Activated B cell treated with CpG ODN at 0.5 μM for 24 hours (primary cell): ENCODE measurements at regions of chr20 and their contacts with region 1.

Region 1: GRCh38 chr20:62642040-62642665 is at the start of gene SLCO4A1:
- DNase-seq: peak; percentile 90
- ATAC-seq: peak; percentile 91
- H3K4me3 Mint-ChIP-seq: peak within 1 kb of the TSS; percentile 87
- H3K27ac Mint-ChIP-seq: peak within 1 kb of the TSS; percentile 72
- H3K4me1 Mint-ChIP-seq: peaks cover 41% of the 10 kb centered on the region
- H3K27me3 Mint-ChIP-seq: no peaks in the 10 kb centered on the region
- CTCF ChIP-seq: no peak
- total RNA-seq, gene SLCO4A1: 27.8 and 38.9 TPM in 2 replicates

Region 2: DNA sequence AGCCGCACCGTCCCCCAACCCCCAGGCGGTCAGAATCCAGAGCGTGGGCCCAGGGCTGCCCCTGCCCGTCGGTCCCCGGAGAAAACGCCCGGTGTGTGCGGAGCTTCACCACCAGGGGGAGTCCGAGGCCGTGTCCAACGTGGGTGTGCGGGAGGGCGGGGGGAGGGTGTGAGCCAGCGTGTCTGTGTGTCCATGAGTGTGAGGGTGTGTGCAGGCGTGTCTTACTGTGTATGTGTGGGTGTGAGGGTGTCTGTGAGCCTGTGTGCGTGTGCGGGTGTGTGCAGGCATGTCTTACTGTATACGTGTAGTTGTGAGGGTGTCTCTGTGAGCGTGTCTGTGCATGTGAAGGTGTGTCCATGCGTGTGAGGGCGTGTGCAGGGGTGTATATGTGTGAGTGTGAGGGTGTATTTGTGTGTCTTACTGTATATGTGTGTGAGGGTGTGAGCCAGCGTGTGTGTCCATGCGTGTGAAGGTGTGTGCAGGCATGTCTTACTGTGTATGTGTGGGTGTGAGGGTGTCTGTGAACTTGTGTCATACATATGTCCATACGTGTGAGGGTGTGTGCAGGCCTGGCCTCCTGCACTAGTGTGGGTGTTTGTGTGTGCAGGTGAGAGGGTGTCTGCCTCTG is 141.8 kb before region 1 on chr20:
- CTCF ChIA-PET with region 1: interaction called, 3 read pairs
- POLR2A ChIA-PET with region 1: interaction called, 11 read pairs
- intact Hi-C with region 1: no loop called
- DNase-seq: peak; percentile 77
- ATAC-seq: peak; percentile 49
- H3K4me3 Mint-ChIP-seq: no peak overlapping the region
- H3K27ac Mint-ChIP-seq: peak overlapping the region; percentile 67
- H3K4me1 Mint-ChIP-seq: peaks cover 42% of the 10 kb centered on the region
- H3K27me3 Mint-ChIP-seq: no peaks in the 10 kb centered on the region
- CTCF ChIP-seq: peak; percentile 33

Region 3: DNA sequence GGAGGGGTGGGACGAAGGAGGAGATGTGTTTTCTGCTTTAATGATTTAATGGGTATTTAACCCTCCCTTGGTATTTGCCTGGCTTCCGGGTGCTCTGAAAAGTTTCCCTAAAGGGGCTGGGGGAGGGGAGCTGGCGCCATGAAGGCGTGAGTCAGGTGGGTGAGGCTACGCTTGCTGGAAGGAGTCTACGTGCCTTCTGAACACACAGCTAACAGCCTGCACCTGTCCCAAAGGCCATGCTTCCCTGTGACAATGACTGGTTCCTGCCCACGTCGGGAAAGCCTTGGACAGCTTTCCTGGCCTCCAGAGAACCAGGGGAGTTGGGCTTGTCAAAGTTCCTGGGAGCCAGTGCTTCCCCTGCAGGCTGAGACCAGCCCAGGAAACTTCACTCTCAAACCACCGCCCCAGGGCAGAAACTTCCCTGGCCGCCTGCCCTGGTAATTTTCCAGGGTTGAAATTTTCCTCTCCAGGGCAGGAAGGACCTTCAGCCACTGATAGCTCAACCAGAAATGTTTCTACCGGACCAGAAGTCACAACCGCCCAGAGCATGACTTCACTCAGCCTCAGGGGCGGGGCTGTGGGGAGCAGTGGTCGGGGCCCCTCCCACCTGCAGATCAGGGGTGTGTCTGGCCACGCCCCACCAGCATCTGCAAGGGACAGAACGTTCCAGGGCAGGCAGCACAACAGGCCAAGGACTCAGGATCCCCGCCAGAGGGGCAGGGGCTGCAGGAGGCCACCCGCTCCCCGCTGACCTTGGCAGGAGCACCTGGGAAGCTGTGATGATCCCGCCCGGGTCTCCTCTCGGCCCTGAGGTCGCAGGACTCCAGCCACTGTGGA is 18.4 kb before region 1 on chr20:
- CTCF ChIA-PET with region 1: interaction called, 22 read pairs
- POLR2A ChIA-PET with region 1: interaction called, 147 read pairs
- intact Hi-C with region 1: loop called (anchors 1 kb)
- DNase-seq: peak; percentile 82
- ATAC-seq: peak; percentile 87
- H3K4me3 Mint-ChIP-seq: peak overlapping the region; percentile 80
- H3K27ac Mint-ChIP-seq: peak overlapping the region; percentile 98
- H3K4me1 Mint-ChIP-seq: peaks cover 43% of the 10 kb centered on the region
- H3K27me3 Mint-ChIP-seq: no peaks in the 10 kb centered on the region
- CTCF ChIP-seq: no peak

Region 4: GRCh38 chr20:62652051-62652926 is 10.1 kb after region 1 on chr20:
- CTCF ChIA-PET with region 1: interaction called, 3 read pairs
- POLR2A ChIA-PET with region 1: interaction called, 96 read pairs
- intact Hi-C with region 1: loop called (anchors 1 kb)
- DNase-seq: peak; percentile 55
- ATAC-seq: peak; percentile 55
- H3K4me3 Mint-ChIP-seq: peak overlapping the region; percentile 82
- H3K27ac Mint-ChIP-seq: peak overlapping the region; percentile 94
- H3K4me1 Mint-ChIP-seq: peaks cover 63% of the 10 kb centered on the region
- H3K27me3 Mint-ChIP-seq: no peaks in the 10 kb centered on the region
- CTCF ChIP-seq: no peak

Region 5: DNA sequence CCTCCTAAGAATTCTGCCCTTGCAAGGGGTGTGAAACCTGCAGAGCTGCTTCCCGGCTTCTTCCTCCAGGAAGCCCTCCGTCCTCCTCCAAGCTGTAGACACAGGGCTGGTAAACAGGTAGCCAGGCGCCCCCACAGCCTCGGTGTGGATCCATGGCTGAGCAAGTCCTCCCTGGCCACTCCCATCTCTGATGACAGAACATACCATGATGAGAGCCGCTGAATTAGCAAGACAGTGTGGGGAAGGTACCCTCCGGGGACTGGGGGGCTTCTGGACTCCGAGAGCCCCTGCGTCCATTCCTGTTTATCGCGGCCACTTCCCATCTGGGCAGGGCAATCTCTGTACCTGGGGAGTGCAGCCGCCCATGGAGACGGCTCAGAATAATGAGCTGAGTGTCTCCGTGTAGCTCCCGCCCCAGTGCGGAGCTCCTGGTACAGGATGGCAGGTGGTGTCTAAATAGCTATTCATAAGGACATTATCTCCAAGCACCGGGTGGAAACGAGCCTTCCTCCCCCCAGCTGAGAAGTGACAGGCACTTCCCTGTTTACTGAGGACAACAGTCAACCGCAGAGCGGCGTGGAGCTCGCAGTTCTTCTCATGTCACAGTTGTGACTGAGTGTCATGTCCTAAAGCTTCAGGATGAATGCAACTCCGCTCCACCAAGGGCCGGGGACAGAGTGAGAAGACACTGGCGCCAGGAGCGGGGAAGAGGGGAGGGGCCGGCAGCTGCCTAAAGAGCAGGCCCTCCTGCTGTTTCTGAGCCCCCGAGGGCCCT is 43.8 kb after region 1 on chr20:
- CTCF ChIA-PET with region 1: no interaction called
- POLR2A ChIA-PET with region 1: no interaction called
- intact Hi-C with region 1: no loop called
- DNase-seq: no peak
- ATAC-seq: peak; percentile 31
- H3K4me3 Mint-ChIP-seq: no peak overlapping the region
- H3K27ac Mint-ChIP-seq: no peak overlapping the region
- H3K4me1 Mint-ChIP-seq: peaks cover 8% of the 10 kb centered on the region
- H3K27me3 Mint-ChIP-seq: peaks cover 7% of the 10 kb centered on the region
- CTCF ChIP-seq: no peak